ENCODE measurements at regions of chr2 and their contacts with region 1.

Region 1: GRCh38 chr2:112941753-112942658 is 31.0 kb downstream of the IL37 start:
- DNase-seq: peak; percentile 37 to 74
- H3K4me3 ChIP-seq: no peak overlapping the region
- H3K27ac ChIP-seq: no peak overlapping the region
- H3K4me1 ChIP-seq: peaks cover 16% of the 10 kb centered on the region
- H3K27me3 ChIP-seq: no peaks in the 10 kb centered on the region
- CTCF ChIP-seq: peak; percentile 72

Region 2: GRCh38 chr2:112481050-112481527 is 460.9 kb before region 1 on chr2:
- CTCF ChIA-PET with region 1: no interaction called
- POLR2A ChIA-PET with region 1: no interaction called
- intact Hi-C with region 1: loop called (anchors 5 kb)
- DNase-seq: peak; percentile 74 to 77
- H3K4me3 ChIP-seq: peak overlapping the region; percentile 74
- H3K27ac ChIP-seq: peak overlapping the region; percentile 28; the same call in 1 of the 2 replicates
- H3K4me1 ChIP-seq: peaks cover 15% of the 10 kb centered on the region
- H3K27me3 ChIP-seq: no peaks in the 10 kb centered on the region
- CTCF ChIP-seq: peak; percentile 62

Region 3: DNA sequence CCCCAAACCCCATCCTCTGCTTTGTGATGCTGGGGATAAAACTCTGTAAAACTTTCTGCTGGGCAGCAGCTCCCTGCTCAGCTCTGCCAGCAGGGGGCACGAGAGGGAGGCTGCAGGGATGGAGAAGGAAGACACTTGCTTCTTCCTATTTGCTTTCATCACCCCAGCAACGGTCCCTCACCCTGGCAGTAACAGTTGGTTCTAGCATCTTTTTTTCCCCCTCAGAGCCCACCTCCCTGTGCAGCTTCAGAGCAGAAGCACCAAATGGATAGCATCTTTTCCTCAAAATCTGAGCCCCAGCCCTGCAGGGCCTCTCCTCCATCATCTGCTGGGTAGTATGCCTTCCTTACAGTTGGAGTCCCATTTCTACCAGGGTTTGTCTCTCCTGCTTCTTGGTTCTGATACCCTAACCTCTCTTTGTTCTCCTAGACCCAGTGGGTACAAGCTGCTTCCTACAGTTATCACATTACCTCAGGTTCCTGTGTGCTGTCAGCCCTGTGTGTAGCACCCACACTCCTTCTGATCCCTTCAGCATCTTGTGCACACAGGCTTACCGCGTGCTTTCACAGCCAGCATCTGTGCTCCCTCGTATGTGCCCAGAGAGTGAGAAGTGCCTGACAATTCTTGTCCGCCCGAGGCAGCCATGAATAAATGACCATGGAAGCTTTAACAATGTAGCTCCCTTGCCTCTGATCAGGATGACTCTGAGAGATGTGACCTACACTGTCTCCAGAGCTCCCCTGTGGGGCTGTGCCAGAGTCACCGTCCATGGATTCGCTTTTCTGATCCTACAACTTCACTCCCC is 192.0 kb before region 1 on chr2:
- CTCF ChIA-PET with region 1: interaction called, 50 read pairs
- POLR2A ChIA-PET with region 1: no interaction called
- intact Hi-C with region 1: loop called (anchors 1 kb)
- DNase-seq: peak in 1 of 2 experiments; percentile 70
- H3K4me3 ChIP-seq: no peak overlapping the region
- H3K27ac ChIP-seq: no peak overlapping the region
- H3K4me1 ChIP-seq: no peaks in the 10 kb centered on the region
- H3K27me3 ChIP-seq: no peaks in the 10 kb centered on the region
- CTCF ChIP-seq: peak; percentile 94

Region 4: GRCh38 chr2:112869258-112869885 is 72.6 kb before region 1 on chr2:
- CTCF ChIA-PET with region 1: interaction called, 3 read pairs
- POLR2A ChIA-PET with region 1: no interaction called
- intact Hi-C with region 1: loop called (anchors 5 kb)
- DNase-seq: peak; percentile 91 to 97
- H3K4me3 ChIP-seq: 0 out of 2 replicates have a peak overlapping the region, but pooled peaks have one; percentile 4
- H3K27ac ChIP-seq: peak overlapping the region; percentile 56
- H3K4me1 ChIP-seq: peaks cover 34% of the 10 kb centered on the region
- H3K27me3 ChIP-seq: no peaks in the 10 kb centered on the region
- CTCF ChIP-seq: no peak

Region 5: DNA sequence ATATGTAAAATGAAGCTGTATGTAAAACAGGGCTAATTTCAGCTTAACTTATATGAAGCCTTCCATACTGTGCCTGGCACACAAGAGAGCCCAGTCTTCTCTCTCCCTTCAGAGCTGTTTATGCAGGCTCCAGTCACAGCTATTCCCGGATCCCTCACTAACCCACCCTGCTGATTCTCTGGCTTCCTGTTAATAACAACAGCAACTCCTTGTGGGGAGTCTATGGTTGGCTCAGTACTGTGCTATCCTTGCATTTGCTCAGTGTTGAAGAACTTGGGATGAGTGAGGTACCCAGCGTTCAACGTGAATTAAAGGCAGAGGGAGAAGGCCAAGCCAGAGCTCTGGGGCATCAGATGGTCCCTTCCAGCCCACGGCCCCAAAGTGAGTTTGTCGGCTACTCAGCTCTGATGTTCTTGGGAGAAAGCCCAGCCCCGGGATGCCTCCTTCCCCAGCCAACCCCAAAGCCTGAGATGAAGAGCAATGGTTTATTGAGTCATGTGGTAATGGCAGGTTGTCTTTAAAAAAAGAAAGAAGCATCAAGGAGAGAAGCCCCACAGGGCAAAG is 275.0 kb after region 1 on chr2:
- CTCF ChIA-PET with region 1: interaction called, 15 read pairs
- POLR2A ChIA-PET with region 1: no interaction called
- intact Hi-C with region 1: no loop called
- DNase-seq: no peak
- H3K4me3 ChIP-seq: no peak overlapping the region
- H3K27ac ChIP-seq: no peak overlapping the region
- H3K4me1 ChIP-seq: peaks cover 2% of the 10 kb centered on the region
- H3K27me3 ChIP-seq: no peaks in the 10 kb centered on the region
- CTCF ChIP-seq: no peak

Measured in PC-9 (cell line).